Dorsolateral prefrontal cortex (tissue), 120 donors: ENCODE measurements at regions of chr15 and their contacts with region 1.

Region 1: DNA sequence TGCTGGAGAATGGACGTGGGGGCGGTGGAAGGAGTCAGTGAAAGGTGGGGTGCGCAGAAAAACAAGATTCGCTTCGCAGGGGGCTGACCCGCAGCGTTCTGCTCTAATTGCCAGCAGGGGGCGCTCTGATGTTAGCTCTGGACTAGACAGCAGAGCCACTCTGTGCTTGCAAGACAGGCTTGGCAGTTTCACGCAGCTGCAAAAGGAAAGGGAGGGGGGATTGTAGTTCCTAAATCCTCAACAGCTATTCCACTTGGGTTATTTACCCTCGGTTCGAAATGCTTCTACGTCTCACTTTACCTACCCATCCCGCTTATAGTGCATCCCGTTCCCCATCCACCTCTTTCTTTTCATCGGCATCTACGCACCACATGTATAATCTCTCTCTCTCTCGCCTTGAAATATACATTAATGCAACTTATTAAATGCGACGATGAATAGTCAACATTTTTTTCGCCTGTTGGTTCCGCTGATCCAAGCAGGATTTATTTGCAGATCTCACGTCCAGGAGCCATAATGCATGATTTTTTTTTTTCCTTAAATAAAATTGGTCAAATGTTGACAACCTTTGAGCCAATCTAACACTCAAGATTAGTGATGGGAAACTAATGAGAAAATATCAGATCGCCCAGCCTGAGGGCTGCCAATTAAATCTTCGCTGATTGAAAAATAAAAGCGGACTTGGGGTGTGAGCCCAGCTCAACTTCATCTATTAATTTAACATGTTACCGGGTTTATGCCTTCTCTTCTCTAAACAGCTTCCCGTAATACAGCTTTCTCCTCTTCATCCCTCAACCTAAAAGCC is 216.4 kb downstream of the MEIS2 start:
- DNase-seq: peak; percentile 78 to 91 (median 86)
- H3K4me3 ChIP-seq: peak overlapping the region; percentile 11 to 66 (median 47)
- H3K27ac ChIP-seq: peak overlapping the region in 24 of 59 donors; percentile 1 to 68 (median 32)
- H3K27me3 ChIP-seq: peaks cover 0 to 93% (median 58%) of the 10 kb centered on the region in 45 donors
- CTCF ChIP-seq: peak; percentile 62 to 96 (median 85)

Region 2: DNA sequence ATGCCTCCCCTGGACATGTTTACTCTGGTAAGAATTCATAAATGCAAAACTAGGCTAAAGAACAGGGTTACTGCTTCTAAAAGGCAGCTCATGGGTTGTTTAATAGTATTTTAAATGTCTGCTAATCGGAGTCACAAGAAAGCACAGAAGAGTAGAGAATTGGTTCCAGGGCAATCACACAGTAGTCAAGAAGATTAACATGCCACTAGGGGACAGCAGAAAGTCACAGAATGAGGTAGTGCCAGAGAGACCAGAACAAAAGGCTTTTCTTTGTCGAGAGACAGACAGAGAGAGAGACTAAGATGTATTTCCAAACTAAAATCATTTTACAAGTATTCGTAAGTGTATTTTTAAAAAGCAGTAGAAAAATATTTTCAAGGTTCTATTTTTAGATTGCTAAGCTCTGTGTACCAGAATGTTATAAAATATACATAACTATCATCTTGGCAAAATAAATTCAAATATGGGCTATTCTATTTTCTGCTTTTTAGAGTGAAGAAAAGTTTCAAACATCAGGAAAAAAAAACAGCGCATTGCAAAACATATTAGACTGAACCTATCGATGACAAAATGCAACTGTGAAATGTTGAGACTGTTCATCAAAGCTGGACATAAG is 382.7 kb before region 1 on chr15:
- intact Hi-C with region 1: loop called (anchors 5 to 10 kb)
- DNase-seq: peak in 2 of 10 donors; percentile 19 to 42
- H3K4me3 ChIP-seq: peak overlapping the region in 20 of 59 donors; percentile 2 to 45 (median 16)
- H3K27ac ChIP-seq: peak overlapping the region in 30 of 59 donors; percentile 1 to 74 (median 47)
- H3K27me3 ChIP-seq: peaks cover 0 to 4% (median 0%) of the 10 kb centered on the region in 45 donors
- CTCF ChIP-seq: peak; percentile 64 to 95 (median 83)

Region 3: DNA sequence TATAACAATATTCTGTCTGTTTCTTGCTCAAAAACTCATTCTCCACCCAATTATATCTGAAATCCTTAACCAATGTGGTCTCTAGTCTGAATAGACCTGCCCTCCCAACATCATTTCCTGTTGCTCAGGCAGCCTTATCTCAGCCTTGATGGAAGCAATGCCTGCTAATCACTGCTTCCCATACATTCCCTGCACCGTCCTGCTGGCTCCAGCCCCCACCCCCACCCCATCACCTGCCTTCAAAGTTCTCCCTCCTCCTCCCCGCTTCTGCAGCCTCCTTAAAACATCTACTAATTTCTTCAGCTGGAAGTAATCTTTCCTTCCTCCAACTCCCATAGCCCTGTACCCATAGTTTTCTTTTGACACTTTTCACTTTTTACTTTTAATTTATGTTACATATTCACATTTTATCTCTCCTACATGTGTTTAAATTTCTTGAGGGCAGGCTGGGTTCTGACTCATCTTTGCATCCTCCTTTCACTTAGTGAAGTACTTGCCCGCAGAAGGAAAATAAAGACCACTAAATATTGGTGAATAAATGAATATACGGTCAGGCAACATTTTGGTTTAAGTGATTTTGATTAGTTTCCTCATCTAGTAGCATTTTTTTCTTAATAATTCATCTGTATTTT is 118.2 kb after region 1 on chr15:
- intact Hi-C with region 1: no loop called
- DNase-seq: no peak
- H3K4me3 ChIP-seq: no peak overlapping the region
- H3K27ac ChIP-seq: no peak overlapping the region
- H3K27me3 ChIP-seq: no peaks in the 10 kb centered on the region
- CTCF ChIP-seq: no peak

Region 4: GRCh38 chr15:37015035-37015434 is 131.1 kb after region 1 on chr15:
- intact Hi-C with region 1: loop called in 1 of 2 experiments (anchors 10 kb)
- DNase-seq: peak in 1 of 10 donors; percentile 21
- H3K4me3 ChIP-seq: peak overlapping the region in 7 of 59 donors; percentile 2 to 48 (median 38)
- H3K27ac ChIP-seq: peak overlapping the region in 30 of 59 donors; percentile 7 to 84 (median 60)
- H3K27me3 ChIP-seq: no peaks in the 10 kb centered on the region
- CTCF ChIP-seq: no peak

Region 5: DNA sequence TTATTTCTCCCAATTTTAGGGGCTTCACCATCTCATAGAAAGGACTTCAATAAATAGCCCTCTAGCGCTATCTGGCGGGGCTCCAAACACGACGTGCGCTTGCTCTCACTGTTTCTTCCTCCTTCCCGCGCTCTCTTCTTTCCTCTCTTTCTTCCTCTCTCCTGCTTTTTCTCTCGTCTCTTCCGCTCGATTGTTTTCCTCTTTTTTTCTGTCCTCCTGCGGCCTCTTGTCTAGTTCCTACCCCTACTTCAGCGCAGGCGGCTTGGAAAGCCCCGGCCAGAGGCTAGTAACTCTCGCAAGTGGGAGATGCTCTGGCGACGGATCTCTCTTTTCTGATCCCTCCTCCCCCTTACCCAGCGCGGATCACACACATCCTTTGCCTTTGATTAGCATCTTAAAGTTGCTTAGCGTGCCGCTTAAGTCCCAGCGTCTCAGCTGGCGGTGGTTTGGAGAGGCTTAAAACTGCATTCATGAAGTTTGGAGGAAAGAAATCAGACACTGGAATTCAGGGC is 222.6 kb after region 1 on chr15:
- intact Hi-C with region 1: loop called (anchors 1 to 2 kb)
- DNase-seq: peak in 4 of 10 donors; percentile 54 to 70 (median 66)
- H3K4me3 ChIP-seq: peak overlapping the region; percentile 9 to 83 (median 46)
- H3K27ac ChIP-seq: peak overlapping the region in 54 of 59 donors; percentile 12 to 98 (median 72)
- H3K27me3 ChIP-seq: peaks cover 0 to 91% (median 51%) of the 10 kb centered on the region in 45 donors
- CTCF ChIP-seq: peak in 52 of 56 donors; percentile 11 to 70 (median 43)

Region 6: DNA sequence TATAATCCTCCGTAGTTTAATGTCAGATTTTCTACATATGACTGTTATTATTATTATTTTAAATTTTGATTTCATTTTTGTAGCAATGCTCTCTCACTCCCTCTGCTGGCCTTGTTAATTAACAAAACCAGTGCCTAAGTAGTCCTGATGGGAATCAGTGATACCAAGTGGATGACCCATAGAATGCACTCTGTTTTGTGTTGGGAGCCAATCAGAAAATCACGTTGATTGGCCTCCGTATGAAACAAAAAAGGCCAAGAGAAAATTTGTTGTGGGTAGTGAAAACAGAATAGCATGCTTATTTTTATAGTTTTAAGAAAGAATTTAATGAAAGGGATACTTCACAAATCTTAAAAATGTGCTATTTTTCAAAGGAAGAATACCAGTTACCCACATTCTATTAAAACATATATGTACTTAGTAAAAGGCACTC is 250.8 kb after region 1 on chr15:
- intact Hi-C with region 1: loop called (anchors 2 to 5 kb)
- DNase-seq: no peak
- H3K4me3 ChIP-seq: no peak overlapping the region
- H3K27ac ChIP-seq: no peak overlapping the region
- H3K27me3 ChIP-seq: peaks cover 0 to 5% (median 0%) of the 10 kb centered on the region in 45 donors
- CTCF ChIP-seq: peak; percentile 56 to 85 (median 74)

Region 7: GRCh38 chr15:37764733-37765191 is 880.8 kb after region 1 on chr15:
- intact Hi-C with region 1: no loop called
- DNase-seq: no peak
- H3K4me3 ChIP-seq: no peak overlapping the region
- H3K27ac ChIP-seq: no peak overlapping the region
- H3K27me3 ChIP-seq: no peaks in the 10 kb centered on the region
- CTCF ChIP-seq: peak in 53 of 56 donors; percentile 12 to 69 (median 42)

Region 8: DNA sequence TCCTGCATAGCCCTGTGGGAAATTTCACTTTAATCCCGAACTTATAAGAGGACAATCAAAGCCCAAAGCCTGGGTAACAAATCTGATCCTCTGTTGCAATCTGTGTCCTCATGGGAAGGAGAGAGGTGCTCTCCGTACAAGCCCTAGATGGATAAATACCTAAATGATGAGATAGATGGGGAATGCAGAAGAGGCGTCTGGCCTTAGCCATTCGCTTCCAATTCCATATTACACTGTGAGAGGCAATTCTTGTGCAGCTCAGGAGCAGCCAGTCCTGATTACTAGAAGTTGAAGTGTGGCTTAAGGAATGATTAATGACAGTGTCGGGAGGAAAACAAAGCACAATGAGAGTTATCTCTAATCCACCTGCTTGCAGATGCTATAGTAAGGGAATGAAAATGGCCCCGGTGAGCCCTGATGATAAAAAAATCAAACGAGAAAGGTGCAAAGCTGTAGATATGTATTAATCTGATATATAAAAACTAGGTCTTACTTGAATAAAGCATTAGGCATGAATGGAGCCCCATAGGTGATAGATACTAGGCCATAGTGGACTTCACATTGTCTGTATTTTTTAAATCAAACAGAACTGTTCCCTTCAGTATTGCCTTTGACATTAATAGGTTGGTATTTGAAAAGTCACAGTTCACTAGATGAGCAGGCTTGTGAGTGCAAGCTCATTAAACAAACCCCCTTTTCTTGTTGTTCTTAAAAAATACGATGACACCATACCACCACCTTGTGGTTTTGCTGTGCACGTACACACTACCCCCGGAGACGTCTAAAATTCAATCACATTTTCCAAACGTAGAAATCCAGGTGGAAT is 996.3 kb after region 1 on chr15:
- intact Hi-C with region 1: loop called in 1 of 2 experiments (anchors 10 kb)
- DNase-seq: peak in 1 of 10 donors; percentile 17
- H3K4me3 ChIP-seq: no peak overlapping the region
- H3K27ac ChIP-seq: no peak overlapping the region
- H3K27me3 ChIP-seq: peaks cover 0 to 8% (median 0%) of the 10 kb centered on the region in 45 donors
- CTCF ChIP-seq: peak; percentile 33 to 80 (median 68)